ENCODE measurements at regions of chrX and their contacts with region 1.

Region 1: DNA sequence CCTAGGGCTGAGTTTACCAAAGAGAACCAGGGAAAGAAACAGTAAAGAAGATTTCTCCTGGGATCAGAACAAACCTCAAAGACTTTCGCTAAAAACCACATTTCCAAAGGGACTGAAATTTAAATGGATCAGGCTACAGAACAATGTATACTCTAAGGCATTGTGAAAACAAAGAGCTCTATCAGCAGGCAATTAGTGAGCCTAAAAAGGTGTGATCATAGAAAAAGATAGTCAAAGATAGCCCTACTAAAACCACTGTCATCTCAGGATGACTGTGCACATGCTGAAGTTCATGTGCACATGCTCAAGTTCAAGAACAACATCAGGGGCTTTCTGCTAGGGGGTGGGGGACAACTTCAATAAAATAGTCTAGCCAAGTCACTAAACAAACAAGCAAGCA is 12.9 kb upstream of the SMIM10L2A start:
- DNase-seq: no peak
- ATAC-seq: no peak
- H3K4me3 ChIP-seq: no peak overlapping the region
- H3K4me3 Mint-ChIP-seq: no peak overlapping the region
- H3K27ac ChIP-seq: no peak overlapping the region
- H3K27ac Mint-ChIP-seq: no peak overlapping the region
- H3K4me1 ChIP-seq: no peaks in the 10 kb centered on the region
- H3K4me1 Mint-ChIP-seq: peaks cover 11% of the 10 kb centered on the region
- H3K27me3 ChIP-seq: no peaks in the 10 kb centered on the region
- H3K27me3 Mint-ChIP-seq: no peaks in the 10 kb centered on the region
- CTCF ChIP-seq: no peak

Region 2: GRCh38 chrX:135354288-135354687 is 54.5 kb before region 1 on chrX:
- CTCF ChIA-PET with region 1: no interaction called
- POLR2A ChIA-PET with region 1: no interaction called
- intact Hi-C with region 1: loop called in 1 of 2 experiments (anchors 5 kb)
- DNase-seq: no peak
- ATAC-seq: no peak
- H3K4me3 ChIP-seq: no peak overlapping the region
- H3K4me3 Mint-ChIP-seq: no peak overlapping the region
- H3K27ac ChIP-seq: no peak overlapping the region
- H3K27ac Mint-ChIP-seq: no peak overlapping the region
- H3K4me1 ChIP-seq: no peaks in the 10 kb centered on the region
- H3K4me1 Mint-ChIP-seq: no peaks in the 10 kb centered on the region
- H3K27me3 ChIP-seq: no peaks in the 10 kb centered on the region
- H3K27me3 Mint-ChIP-seq: no peaks in the 10 kb centered on the region
- CTCF ChIP-seq: no peak

Region 3: DNA sequence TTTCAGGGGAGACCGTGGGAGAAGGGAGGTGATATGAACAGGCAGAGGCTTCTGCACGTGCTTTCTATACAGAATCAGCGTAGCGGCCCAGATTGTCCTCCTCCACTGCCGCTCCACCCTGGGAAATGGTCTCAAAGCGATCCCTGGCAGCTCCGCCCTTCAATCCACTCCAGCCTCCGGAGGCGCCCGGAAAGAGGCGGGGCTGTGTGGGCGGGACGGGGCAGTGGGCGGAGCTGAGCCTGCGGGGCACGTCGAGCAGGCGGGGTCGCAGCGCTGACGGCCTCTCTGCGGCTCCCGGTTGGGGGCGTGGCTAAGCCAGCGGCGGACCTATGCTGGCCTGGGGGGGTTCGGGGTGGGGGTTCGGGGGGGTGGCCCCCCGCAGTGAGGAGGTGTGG is 12.7 kb after region 1 on chrX:
- CTCF ChIA-PET with region 1: no interaction called
- POLR2A ChIA-PET with region 1: no interaction called
- intact Hi-C with region 1: no loop called
- DNase-seq: peak; percentile 75 to 93 (median 86)
- ATAC-seq: peak; percentile 92
- H3K4me3 ChIP-seq: peak overlapping the region; percentile 40
- H3K4me3 Mint-ChIP-seq: peak overlapping the region; percentile 81
- H3K27ac ChIP-seq: no peak overlapping the region
- H3K27ac Mint-ChIP-seq: peak overlapping the region; percentile 51
- H3K4me1 ChIP-seq: peaks cover 11% of the 10 kb centered on the region
- H3K4me1 Mint-ChIP-seq: peaks cover 5% of the 10 kb centered on the region
- H3K27me3 ChIP-seq: no peaks in the 10 kb centered on the region
- H3K27me3 Mint-ChIP-seq: no peaks in the 10 kb centered on the region
- CTCF ChIP-seq: no peak